ENCODE measurements at regions of chr9 and their contacts with region 1.

Region 1: GRCh38 chr9:111916234-111916645 is 19.6 kb downstream of the UGCG start:
- DNase-seq: no peak
- H3K4me3 ChIP-seq: no peak overlapping the region
- H3K4me3 Mint-ChIP-seq: peak overlapping the region in 7 of 8 donors; percentile 60 to 84 (median 77)
- H3K27ac ChIP-seq: no peak overlapping the region
- H3K27ac Mint-ChIP-seq: peak overlapping the region in 5 of 7 donors; percentile 57 to 86 (median 77)
- H3K4me1 ChIP-seq: peaks cover 52% of the 10 kb centered on the region
- H3K4me1 Mint-ChIP-seq: peaks cover 41 to 71% (median 55%) of the 10 kb centered on the region in 4 donors
- H3K27me3 ChIP-seq: no peaks in the 10 kb centered on the region
- H3K27me3 Mint-ChIP-seq: no peaks in the 10 kb centered on the region

Region 2: DNA sequence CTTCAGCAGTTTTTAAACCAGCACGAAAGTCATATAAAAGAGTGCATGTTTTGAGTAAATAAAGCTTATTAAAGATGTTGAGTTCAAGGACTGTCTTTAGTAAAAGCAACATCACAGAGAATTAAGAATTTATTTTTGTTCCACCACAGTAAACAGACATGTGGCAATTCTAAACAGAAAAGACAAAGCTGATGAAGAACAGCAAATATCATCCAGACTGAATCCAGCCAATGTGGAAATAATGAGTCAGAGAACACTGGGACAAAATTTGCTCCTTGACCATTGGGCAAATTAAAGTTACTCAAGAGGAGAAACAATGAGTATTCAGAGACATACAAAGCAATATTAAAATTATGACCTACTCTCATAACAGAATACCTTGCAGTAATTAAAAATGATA is 615.0 kb before region 1 on chr9:
- CTCF ChIA-PET with region 1: no interaction called
- POLR2A ChIA-PET with region 1: no interaction called
- intact Hi-C with region 1: no loop called
- DNase-seq: no peak
- H3K4me3 ChIP-seq: no peak overlapping the region
- H3K4me3 Mint-ChIP-seq: no peak overlapping the region
- H3K27ac ChIP-seq: no peak overlapping the region
- H3K27ac Mint-ChIP-seq: no peak overlapping the region
- H3K4me1 ChIP-seq: no peaks in the 10 kb centered on the region
- H3K4me1 Mint-ChIP-seq: peaks cover 0 to 2% (median 0%) of the 10 kb centered on the region in 4 donors
- H3K27me3 ChIP-seq: no peaks in the 10 kb centered on the region
- H3K27me3 Mint-ChIP-seq: peaks cover 0 to 5% of the 10 kb centered on the region in 2 donors

Region 3: DNA sequence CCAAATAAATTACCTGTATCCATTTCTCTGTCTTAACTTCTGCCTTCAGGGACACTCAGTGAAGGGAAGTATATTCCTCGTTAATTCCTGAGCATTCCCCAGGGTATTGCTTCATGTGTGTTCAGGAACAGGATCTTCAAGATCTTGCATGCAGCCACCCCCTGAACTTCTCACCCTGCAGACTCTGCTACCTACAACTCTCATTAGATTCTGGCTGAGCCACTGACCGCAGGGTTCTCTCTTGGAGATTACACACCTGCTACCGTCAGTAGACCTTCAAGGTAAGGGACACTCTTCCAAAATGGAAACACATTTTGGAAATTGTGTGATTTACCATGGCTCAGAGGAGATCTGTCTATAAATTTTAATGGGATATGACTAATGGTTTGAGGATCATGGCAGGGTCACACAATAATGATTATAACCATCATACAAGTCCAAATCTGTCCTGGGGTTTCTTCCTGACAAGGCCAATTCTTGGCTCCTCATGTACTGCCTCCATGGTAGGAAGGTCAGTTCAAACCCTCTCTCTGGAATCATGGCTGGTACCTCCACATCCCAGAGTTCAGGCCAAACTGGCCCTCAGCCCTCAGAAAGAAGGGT is 58.5 kb before region 1 on chr9:
- CTCF ChIA-PET with region 1: no interaction called
- POLR2A ChIA-PET with region 1: no interaction called
- intact Hi-C with region 1: no loop called
- DNase-seq: no peak
- H3K4me3 ChIP-seq: no peak overlapping the region
- H3K4me3 Mint-ChIP-seq: no peak overlapping the region
- H3K27ac ChIP-seq: no peak overlapping the region
- H3K27ac Mint-ChIP-seq: peak overlapping the region in 1 of 7 donors; percentile 31
- H3K4me1 ChIP-seq: no peaks in the 10 kb centered on the region
- H3K4me1 Mint-ChIP-seq: no peaks in the 10 kb centered on the region
- H3K27me3 ChIP-seq: no peaks in the 10 kb centered on the region
- H3K27me3 Mint-ChIP-seq: peaks cover 0 to 3% of the 10 kb centered on the region in 2 donors

Region 4: GRCh38 chr9:111937781-111938426 is 21.7 kb after region 1 on chr9:
- CTCF ChIA-PET with region 1: interaction called, 6 read pairs
- POLR2A ChIA-PET with region 1: interaction called, 12 read pairs
- intact Hi-C with region 1: no loop called
- DNase-seq: peak; percentile 56 to 79 (median 60)
- H3K4me3 ChIP-seq: peak overlapping the region in 1 of 2 donors; percentile 42
- H3K4me3 Mint-ChIP-seq: peak overlapping the region; percentile 57 to 93 (median 82)
- H3K27ac ChIP-seq: peak overlapping the region; percentile 39
- H3K27ac Mint-ChIP-seq: peak overlapping the region; percentile 74 to 97 (median 96)
- H3K4me1 ChIP-seq: peaks cover 31% of the 10 kb centered on the region
- H3K4me1 Mint-ChIP-seq: peaks cover 25 to 41% (median 33%) of the 10 kb centered on the region in 4 donors
- H3K27me3 ChIP-seq: no peaks in the 10 kb centered on the region
- H3K27me3 Mint-ChIP-seq: no peaks in the 10 kb centered on the region

Measured in CD4-positive, alpha-beta memory T cell (primary cell).